Upper lobe of right lung (tissue), 1 donor: ENCODE measurements at regions of chr11 and their contacts with region 1.

Region 1: GRCh38 chr11:64152841-64153691 is 12.8 kb downstream of the MACROD1 start:
- DNase-seq: peak; percentile 84
- ATAC-seq: peak; percentile 93
- H3K4me3 ChIP-seq: no peak overlapping the region
- H3K27ac ChIP-seq: no peak overlapping the region
- H3K4me1 ChIP-seq: peaks cover 7% of the 10 kb centered on the region
- H3K27me3 ChIP-seq: no peaks in the 10 kb centered on the region
- CTCF ChIP-seq: peak; percentile 100

Region 2: GRCh38 chr11:63838678-63839507 is 314.2 kb before region 1 on chr11 and contains the start of gene MARK2:
- intact Hi-C with region 1: loop called (anchors 10 kb)
- DNase-seq: peak; percentile 98
- ATAC-seq: peak; percentile 93
- H3K4me3 ChIP-seq: peak within 1 kb of the TSS; percentile 68
- H3K27ac ChIP-seq: peak within 1 kb of the TSS; percentile 81
- H3K4me1 ChIP-seq: peaks cover 46% of the 10 kb centered on the region
- H3K27me3 ChIP-seq: no peaks in the 10 kb centered on the region
- CTCF ChIP-seq: no peak
- total RNA-seq, gene MARK2: 40.7 TPM

Region 3: GRCh38 chr11:64000026-64000739 is 152.9 kb before region 1 on chr11:
- intact Hi-C with region 1: loop called (anchors 5 kb)
- DNase-seq: peak; percentile 84
- ATAC-seq: peak; percentile 89
- H3K4me3 ChIP-seq: peak overlapping the region; percentile 44
- H3K27ac ChIP-seq: no peak overlapping the region
- H3K4me1 ChIP-seq: peaks cover 37% of the 10 kb centered on the region
- H3K27me3 ChIP-seq: no peaks in the 10 kb centered on the region
- CTCF ChIP-seq: peak; percentile 68

Region 4: DNA sequence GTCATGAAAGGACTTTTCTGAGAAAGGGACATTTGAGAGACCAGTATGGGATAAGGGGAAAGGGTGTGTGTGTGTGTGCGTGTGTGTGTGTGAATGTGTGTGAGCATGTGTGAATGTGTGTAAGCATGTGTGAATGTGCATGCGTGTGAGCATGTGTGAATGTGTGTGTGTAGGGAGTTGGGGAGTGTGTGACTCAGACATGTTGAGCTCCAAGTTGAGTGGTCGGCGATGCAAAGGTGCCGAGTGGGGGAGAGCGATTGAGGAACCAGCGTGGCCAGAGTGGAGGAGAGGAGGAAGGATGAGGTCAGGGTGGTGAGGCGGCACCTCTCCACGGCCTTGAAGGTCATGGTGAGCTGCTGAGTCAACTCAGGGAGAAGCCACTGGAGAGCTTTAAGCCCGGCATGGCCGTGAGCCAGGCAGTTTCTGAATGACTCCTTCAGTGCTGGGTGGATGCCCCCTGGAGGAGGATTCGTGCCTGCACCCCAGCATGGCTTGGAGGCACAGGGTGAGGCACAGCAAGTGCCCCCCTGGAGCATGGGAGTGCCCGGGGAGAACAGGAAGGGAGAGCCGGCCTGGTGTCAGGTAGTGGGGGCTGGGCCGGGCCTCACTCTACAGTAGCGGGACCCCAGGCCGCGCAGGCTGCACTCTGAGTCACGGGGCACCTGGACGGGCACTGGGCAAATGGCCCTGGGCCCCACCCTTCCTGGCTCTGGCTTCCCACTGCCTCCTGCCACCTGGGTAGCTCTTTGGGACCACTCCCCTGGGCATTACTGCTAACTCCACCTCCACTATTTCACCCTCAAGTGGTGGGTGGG is 178.7 kb after region 1 on chr11:
- intact Hi-C with region 1: no loop called
- DNase-seq: peak; percentile 95
- ATAC-seq: peak; percentile 92
- H3K4me3 ChIP-seq: no peak overlapping the region
- H3K27ac ChIP-seq: no peak overlapping the region
- H3K4me1 ChIP-seq: peaks cover 13% of the 10 kb centered on the region
- H3K27me3 ChIP-seq: no peaks in the 10 kb centered on the region
- CTCF ChIP-seq: peak; percentile 57